ENCODE measurements at regions of chr7 and their contacts with region 1.

Region 1: DNA sequence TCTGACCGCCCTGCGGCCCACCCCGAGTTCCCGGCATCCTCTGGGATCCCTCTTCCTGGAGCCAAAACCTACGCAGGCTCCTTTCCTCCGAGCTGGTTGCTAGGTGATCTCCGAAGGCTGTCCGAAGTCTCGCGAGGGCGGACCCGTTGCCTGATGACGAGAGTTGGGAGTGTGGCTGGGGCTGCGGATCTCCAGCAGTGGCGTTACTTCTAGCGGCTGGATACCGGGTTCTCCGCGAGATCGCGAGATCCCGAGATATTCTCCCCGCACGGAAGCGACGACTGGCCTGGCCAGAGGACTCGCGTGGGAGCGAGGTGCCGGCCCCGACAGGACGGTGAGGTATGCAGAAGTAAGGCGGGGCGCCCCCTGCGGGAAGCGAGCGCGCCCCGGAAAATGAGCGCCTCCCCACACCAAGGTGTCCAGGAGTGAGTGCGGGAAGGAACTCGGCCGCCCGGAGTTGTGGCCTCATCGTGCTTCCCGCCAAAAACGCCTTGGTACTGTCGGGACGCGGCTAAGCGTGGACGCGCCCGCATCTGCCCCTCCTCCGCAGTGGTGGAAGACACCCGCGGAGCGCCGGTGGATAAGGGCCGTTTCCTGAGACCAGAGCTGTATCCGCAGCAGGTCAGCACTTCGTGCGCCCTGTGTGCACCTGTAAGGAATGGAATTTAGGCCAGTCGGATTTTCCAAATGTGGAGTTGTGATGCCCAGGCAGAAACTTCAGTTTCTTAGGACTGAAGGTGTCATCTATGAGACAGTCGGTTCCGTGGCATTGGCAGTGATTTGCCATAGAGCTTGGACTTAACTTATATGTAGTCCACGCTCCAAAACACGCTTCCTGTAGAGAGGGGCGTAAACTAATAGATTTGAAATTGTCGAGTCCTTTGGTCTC is at the start of gene AGBL3:
- ATAC-seq: peak; percentile 97 to 99 (median 98)
- H3K4me3 ChIP-seq: peak within 1 kb of the TSS; percentile 64 to 97 (median 94)
- H3K27ac ChIP-seq: peak within 1 kb of the TSS; percentile 84 to 88
- H3K4me1 ChIP-seq: peaks cover 4 to 19% of the 10 kb centered on the region in 2 donors
- total RNA-seq, gene AGBL3: 0.97 to 6.6 (median 2.0) TPM

Region 2: GRCh38 chr7:135170274-135170997 is 183.8 kb after region 1 on chr7 and contains the start of gene CYREN:
- in situ Hi-C with region 1: loop called in 1 of 9 experiments (anchors 25 kb)
- ATAC-seq: peak; percentile 91 to 98 (median 97)
- H3K4me3 ChIP-seq: peak within 1 kb of the TSS; percentile 56 to 98 (median 91)
- H3K27ac ChIP-seq: peak within 1 kb of the TSS; percentile 60 to 93
- H3K4me1 ChIP-seq: peaks cover 5 to 10% of the 10 kb centered on the region in 2 donors
- total RNA-seq, gene CYREN: 13.0 to 47.3 (median 28.4) TPM